T-cell (primary cell): ENCODE measurements at regions of chr9 and their contacts with region 1.

Region 1: GRCh38 chr9:20473515-20474013 is 148.7 kb downstream of the MLLT3 start:
- DNase-seq: no peak
- ATAC-seq: no peak
- H3K4me3 ChIP-seq: no peak overlapping the region
- H3K4me3 Mint-ChIP-seq: no peak overlapping the region
- H3K27ac ChIP-seq: no peak overlapping the region
- H3K27ac Mint-ChIP-seq: no peak overlapping the region
- H3K4me1 ChIP-seq: peaks cover 0 to 6% of the 10 kb centered on the region in 2 experiments
- H3K4me1 Mint-ChIP-seq: peaks cover 65 to 74% (median 68%) of the 10 kb centered on the region in 3 donors
- H3K27me3 ChIP-seq: no peaks in the 10 kb centered on the region
- H3K27me3 Mint-ChIP-seq: no peaks in the 10 kb centered on the region

Region 2: DNA sequence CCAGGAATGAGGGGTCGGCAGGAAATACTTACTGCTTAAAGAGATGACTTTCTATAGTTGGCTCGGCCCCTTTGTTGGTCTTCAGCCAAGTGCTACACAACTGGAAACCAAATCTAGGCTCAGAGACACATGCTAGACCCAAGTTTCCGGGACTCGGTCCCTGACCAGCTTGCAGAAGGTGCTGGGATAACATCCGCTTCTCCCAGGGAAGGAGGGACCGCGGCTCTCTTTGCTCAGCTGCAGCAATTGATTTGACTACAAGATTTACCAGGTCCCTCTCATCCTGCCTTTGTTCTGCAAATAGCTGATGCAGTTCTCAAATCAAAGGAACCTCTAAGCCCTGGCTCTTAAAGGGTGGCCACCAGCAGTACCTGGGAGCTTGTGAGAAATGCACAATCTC is 165.9 kb before region 1 on chr9:
- CTCF ChIA-PET with region 1: no interaction called
- POLR2A ChIA-PET with region 1: no interaction called
- DNase-seq: no peak
- ATAC-seq: peak in 1 of 4 experiments; percentile 39
- H3K4me3 ChIP-seq: no peak overlapping the region
- H3K4me3 Mint-ChIP-seq: no peak overlapping the region
- H3K27ac ChIP-seq: no peak overlapping the region
- H3K27ac Mint-ChIP-seq: no peak overlapping the region
- H3K4me1 ChIP-seq: no peaks in the 10 kb centered on the region
- H3K4me1 Mint-ChIP-seq: peaks cover 6 to 33% (median 8%) of the 10 kb centered on the region in 3 donors
- H3K27me3 ChIP-seq: no peaks in the 10 kb centered on the region
- H3K27me3 Mint-ChIP-seq: no peaks in the 10 kb centered on the region

Region 3: DNA sequence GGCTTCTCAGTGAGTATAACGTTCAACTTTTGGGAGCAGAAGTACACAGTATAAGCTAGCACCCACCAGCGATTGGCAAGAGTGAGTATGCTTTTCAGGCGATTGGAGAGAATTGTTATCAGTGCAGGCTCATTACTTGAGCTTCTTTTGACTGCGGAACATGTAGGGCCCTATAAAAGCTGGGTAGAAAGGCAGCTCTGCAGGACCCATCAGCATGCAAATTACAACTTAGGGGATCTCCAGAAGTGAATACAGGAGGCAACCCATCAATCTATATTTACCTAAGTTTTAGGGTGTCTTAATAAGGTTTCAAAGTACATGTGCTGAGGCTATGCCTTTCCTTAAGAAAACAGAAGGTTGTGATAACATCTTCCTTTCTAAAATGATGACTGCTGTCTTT is 76.2 kb before region 1 on chr9:
- CTCF ChIA-PET with region 1: no interaction called
- POLR2A ChIA-PET with region 1: no interaction called
- DNase-seq: no peak
- ATAC-seq: no peak
- H3K4me3 ChIP-seq: no peak overlapping the region
- H3K4me3 Mint-ChIP-seq: peak overlapping the region in 1 of 3 donors; percentile 52
- H3K27ac ChIP-seq: no peak overlapping the region
- H3K27ac Mint-ChIP-seq: peak overlapping the region; percentile 35 to 50
- H3K4me1 ChIP-seq: peaks cover 16 to 38% of the 10 kb centered on the region in 2 experiments
- H3K4me1 Mint-ChIP-seq: peaks cover 69 to 76% (median 71%) of the 10 kb centered on the region in 3 donors
- H3K27me3 ChIP-seq: no peaks in the 10 kb centered on the region
- H3K27me3 Mint-ChIP-seq: no peaks in the 10 kb centered on the region

Region 4: GRCh38 chr9:21031091-21031807 is 557.7 kb after region 1 on chr9 and contains the start of gene HACD4:
- CTCF ChIA-PET with region 1: no interaction called
- POLR2A ChIA-PET with region 1: interaction called in 1 of 2 experiments, 12 read pairs
- DNase-seq: peak; percentile 49 to 80 (median 63)
- ATAC-seq: peak; percentile 89 to 91 (median 90)
- H3K4me3 ChIP-seq: peak within 1 kb of the TSS; percentile 69 to 93
- H3K4me3 Mint-ChIP-seq: peak within 1 kb of the TSS in 2 of 3 donors; percentile 77 to 80
- H3K27ac ChIP-seq: peak within 1 kb of the TSS; percentile 93
- H3K27ac Mint-ChIP-seq: peak within 1 kb of the TSS; percentile 73 to 86
- H3K4me1 ChIP-seq: peaks cover 12 to 20% of the 10 kb centered on the region in 2 experiments
- H3K4me1 Mint-ChIP-seq: peaks cover 27 to 38% (median 30%) of the 10 kb centered on the region in 3 donors
- H3K27me3 ChIP-seq: no peaks in the 10 kb centered on the region
- H3K27me3 Mint-ChIP-seq: no peaks in the 10 kb centered on the region
- total RNA-seq, gene HACD4: 8.9 to 11.8 (median 10.2) TPM